ENCODE measurements at regions of chr20 and their contacts with region 1.

Region 1: DNA sequence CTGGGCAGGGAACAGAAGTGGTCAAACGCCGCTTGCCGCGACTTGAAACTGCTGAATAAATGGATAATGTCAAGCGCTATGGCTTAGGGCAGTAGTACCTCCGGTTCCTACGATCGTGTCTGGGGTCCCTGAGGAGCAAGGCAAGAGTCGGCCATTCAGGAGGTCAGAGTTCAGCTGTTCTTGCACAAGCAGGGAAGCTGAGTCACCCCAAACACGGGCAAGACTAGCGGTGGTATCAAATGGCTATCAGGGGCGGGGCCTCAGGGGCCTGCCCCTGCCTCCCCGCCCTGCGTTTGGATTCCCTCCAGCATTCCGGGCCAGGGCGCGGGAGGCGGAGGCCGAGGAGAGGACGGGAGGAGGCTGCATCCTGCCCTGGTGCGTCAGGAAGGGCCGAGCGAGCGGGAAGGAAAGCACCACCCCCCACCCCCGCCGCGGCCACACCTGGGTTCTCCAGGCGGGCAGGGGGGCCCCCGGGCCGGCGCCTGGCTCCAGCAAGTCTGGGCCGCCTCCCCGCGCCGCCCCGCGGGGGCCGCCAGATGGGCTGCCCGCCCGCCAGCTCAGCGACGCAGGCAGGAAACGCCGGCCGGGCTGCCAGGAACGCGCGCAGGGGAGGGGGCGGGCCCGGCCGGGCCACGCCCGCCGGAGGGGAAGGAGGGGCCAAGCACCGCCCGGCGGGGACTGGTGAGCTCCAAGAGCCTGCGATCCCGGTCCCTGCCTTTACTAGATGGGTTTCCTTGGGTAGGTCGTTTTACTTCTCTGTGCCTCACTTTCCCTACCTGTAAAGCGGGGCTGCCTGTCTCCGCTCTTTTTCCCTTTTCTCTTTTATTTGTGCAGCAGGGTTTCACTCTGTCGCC is 32.2 kb upstream of the ID1 start:
- DNase-seq: peak; percentile 100
- H3K4me3 Mint-ChIP-seq: peak overlapping the region; percentile 89
- H3K27ac Mint-ChIP-seq: peak overlapping the region; percentile 98
- H3K4me1 Mint-ChIP-seq: peaks cover 58% of the 10 kb centered on the region
- H3K27me3 Mint-ChIP-seq: no peaks in the 10 kb centered on the region
- CTCF ChIP-seq: peak; percentile 12

Region 2: GRCh38 chr20:31406115-31406514 is 166.8 kb before region 1 on chr20 and contains the start of gene DEFB121:
- CTCF ChIA-PET with region 1: no interaction called
- intact Hi-C with region 1: no loop called
- DNase-seq: no peak
- H3K4me3 Mint-ChIP-seq: no peak within 1 kb of the TSS
- H3K27ac Mint-ChIP-seq: no peak within 1 kb of the TSS
- H3K4me1 Mint-ChIP-seq: no peaks in the 10 kb centered on the region
- H3K27me3 Mint-ChIP-seq: peaks cover 15% of the 10 kb centered on the region
- CTCF ChIP-seq: no peak
- total RNA-seq, gene DEFB121: not detected in 2 replicates

Region 3: DNA sequence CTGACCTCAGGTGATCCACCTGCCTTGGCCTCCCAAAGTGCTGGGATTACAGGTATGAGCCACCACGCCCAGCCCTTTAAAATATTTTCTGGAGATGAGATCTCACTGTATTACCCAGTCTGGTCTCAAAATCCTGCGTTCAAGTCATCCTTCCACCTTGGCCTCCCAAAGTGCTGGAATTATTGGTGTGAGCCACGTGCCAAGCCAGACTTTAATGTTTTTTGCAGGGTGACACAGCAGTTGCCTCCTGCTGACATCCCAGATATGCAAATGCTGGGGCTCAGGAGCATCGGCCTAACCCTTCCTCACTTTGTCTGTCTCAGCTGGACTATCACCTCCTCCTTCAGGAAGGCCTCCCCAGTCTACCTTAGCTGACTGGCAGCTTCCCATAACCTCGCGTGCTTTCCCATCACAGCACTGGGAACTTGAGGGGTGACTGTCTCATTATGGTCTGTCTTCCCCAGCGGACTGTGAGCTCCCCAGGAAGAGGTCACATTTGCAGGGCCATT is 17.8 kb after region 1 on chr20:
- CTCF ChIA-PET with region 1: interaction called, 42 read pairs
- intact Hi-C with region 1: loop called (anchors 2 kb)
- DNase-seq: no peak
- H3K4me3 Mint-ChIP-seq: no peak overlapping the region
- H3K27ac Mint-ChIP-seq: no peak overlapping the region
- H3K4me1 Mint-ChIP-seq: peaks cover 40% of the 10 kb centered on the region
- H3K27me3 Mint-ChIP-seq: no peaks in the 10 kb centered on the region
- CTCF ChIP-seq: no peak

Region 4: DNA sequence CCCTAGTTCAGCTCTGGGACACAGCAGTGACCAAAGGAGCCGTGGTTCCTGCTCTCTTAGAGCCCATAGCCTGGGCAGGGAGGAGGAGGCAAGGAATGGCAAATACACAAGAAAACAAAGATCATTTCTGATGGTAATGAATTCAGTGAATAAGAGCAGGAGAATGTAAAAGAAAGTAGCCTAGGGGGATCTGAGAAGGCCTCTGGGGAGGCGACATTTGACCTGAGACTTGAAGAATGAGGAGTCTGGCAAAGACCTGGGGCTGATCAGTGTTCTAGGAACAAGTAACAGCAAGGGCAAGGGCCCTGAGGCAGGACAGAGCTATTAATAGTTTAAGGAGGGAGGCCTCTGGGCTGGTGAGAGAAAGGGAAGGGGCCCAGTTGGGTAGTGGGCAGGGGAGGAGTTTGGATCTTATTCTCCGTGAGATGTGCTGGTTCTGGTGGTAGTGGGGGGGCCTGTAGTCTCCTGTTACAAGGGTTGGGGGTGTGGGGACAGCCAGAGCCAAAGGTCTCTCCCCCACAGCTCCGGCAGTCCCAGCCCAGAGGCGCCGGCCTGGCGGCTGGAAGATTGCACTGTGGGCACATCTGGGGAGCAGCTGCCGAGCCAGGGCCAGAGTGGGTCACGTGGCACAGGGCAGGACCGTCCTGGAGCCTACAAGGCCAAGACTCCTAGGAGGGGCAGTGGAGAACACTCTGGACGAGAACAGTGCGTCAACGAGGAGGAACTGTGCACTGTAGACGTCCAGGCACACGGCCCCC is 22.9 kb after region 1 on chr20:
- CTCF ChIA-PET with region 1: interaction called, 42 read pairs
- intact Hi-C with region 1: loop called (anchors 2 kb)
- DNase-seq: peak; percentile 68
- H3K4me3 Mint-ChIP-seq: peak overlapping the region; percentile 75
- H3K27ac Mint-ChIP-seq: peak overlapping the region; percentile 80
- H3K4me1 Mint-ChIP-seq: peaks cover 48% of the 10 kb centered on the region
- H3K27me3 Mint-ChIP-seq: no peaks in the 10 kb centered on the region
- CTCF ChIP-seq: no peak

Region 5: DNA sequence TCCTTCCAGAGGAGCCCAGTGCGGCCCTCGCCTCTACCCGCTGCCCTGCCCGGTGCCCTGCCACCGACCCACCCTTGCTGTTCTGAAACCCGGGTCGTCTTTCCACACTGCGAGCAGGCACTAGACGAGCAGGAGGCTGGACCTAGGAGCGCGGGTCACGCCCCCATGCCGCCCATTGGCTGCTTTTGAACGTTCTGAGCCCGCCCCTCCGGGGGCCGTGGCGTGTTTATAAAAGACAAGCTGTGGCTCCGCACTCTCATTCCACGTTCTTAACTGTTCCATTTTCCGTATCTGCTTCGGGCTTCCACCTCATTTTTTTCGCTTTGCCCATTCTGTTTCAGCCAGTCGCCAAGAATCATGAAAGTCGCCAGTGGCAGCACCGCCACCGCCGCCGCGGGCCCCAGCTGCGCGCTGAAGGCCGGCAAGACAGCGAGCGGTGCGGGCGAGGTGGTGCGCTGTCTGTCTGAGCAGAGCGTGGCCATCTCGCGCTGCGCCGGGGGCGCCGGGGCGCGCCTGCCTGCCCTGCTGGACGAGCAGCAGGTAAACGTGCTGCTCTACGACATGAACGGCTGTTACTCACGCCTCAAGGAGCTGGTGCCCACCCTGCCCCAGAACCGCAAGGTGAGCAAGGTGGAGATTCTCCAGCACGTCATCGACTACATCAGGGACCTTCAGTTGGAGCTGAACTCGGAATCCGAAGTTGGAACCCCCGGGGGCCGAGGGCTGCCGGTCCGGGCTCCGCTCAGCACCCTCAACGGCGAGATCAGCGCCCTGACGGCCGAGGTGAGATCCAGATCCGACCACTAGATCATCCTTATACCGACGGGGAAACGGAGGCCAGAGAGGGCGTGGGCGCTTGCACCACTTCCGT is 32.3 kb after region 1 on chr20 and contains the start of gene ID1:
- CTCF ChIA-PET with region 1: interaction called, 1,048 read pairs
- intact Hi-C with region 1: no loop called
- DNase-seq: peak; percentile 99
- H3K4me3 Mint-ChIP-seq: peak within 1 kb of the TSS; percentile 98
- H3K27ac Mint-ChIP-seq: peak within 1 kb of the TSS; percentile 96
- H3K4me1 Mint-ChIP-seq: peaks cover 33% of the 10 kb centered on the region
- H3K27me3 Mint-ChIP-seq: peaks cover 11% of the 10 kb centered on the region
- CTCF ChIP-seq: no peak
- total RNA-seq, gene ID1: 347 and 431 TPM in 2 replicates

Region 6: DNA sequence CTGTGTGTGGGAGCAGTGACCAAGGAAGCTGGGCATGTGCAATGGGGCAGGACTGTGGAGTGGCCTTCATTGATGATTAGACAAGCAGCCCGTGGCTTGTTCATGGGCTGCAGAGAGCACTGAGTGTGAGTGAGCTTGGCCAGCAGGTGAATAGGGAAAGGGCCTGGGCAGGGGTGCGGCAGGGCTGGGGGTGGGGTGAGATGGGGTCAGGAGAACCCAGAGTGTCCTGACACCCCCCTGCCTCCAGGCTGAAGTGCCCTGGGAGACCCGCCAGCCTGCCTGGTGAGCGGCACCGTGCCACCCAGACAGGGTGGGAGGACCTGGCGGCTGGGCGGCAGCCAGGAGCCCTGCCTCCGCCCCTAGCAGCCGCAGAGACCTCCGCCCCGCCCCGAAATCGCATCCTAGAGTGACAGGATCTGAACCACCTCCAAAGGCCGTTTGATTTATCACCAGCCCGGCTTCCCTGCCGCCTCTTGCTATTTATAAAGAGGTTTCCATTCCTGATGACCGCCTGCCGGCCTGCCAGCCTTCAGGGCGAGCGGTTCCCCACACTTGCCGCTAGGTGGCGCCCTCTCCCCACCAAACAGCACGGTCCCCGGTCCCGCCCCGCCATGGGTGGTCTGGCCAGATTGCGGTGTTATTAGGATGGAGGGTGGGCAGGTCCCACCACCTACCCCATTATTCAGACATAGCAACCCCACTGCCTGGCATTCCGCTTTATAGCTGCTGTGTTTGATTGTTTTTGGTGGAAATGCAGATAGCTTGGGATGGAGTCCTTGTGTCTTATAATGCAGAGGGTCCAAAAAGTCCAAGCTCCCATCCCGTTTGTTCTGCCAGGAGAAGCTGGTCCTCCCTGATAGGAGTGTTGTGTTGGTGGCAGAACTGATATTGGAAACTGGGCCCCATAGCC is 249.7 kb after region 1 on chr20:
- CTCF ChIA-PET with region 1: no interaction called
- intact Hi-C with region 1: no loop called
- DNase-seq: peak; percentile 88
- H3K4me3 Mint-ChIP-seq: peak overlapping the region; percentile 35
- H3K27ac Mint-ChIP-seq: no peak overlapping the region
- H3K4me1 Mint-ChIP-seq: no peaks in the 10 kb centered on the region
- H3K27me3 Mint-ChIP-seq: no peaks in the 10 kb centered on the region
- CTCF ChIP-seq: peak; percentile 100

Measured in Calu3 (cell line).